Activated T-helper 1 cell treated with anti-CD3 and anti-CD28 coated beads, Interleukin-12 subunit alpha, Interleukin-12 subunit beta, Interleukin-2, Interleukin-4 antibody, amounts not matched to agents 30 ng/mL and 10 ng/mL and 1 ng/mL, durations not matched to agents 14 hours and 24 hours and 36 hours (primary cell): ENCODE measurements at regions of chr4 and their contacts with region 1.

Region 1: GRCh38 chr4:140095694-140096482 is 58.1 kb downstream of the MAML3 start:
- DNase-seq: peak; percentile 63
- H3K4me3 Mint-ChIP-seq: peak overlapping the region; percentile 80
- H3K27ac Mint-ChIP-seq: peak overlapping the region; percentile 94
- H3K4me1 Mint-ChIP-seq: peaks cover 89% of the 10 kb centered on the region
- H3K27me3 Mint-ChIP-seq: peaks cover 3% of the 10 kb centered on the region

Region 2: GRCh38 chr4:138562544-138562991 is 1533.3 kb before region 1 on chr4:
- intact Hi-C with region 1: no loop called
- DNase-seq: no peak
- H3K4me3 Mint-ChIP-seq: no peak overlapping the region
- H3K27ac Mint-ChIP-seq: no peak overlapping the region
- H3K4me1 Mint-ChIP-seq: no peaks in the 10 kb centered on the region
- H3K27me3 Mint-ChIP-seq: no peaks in the 10 kb centered on the region

Region 3: DNA sequence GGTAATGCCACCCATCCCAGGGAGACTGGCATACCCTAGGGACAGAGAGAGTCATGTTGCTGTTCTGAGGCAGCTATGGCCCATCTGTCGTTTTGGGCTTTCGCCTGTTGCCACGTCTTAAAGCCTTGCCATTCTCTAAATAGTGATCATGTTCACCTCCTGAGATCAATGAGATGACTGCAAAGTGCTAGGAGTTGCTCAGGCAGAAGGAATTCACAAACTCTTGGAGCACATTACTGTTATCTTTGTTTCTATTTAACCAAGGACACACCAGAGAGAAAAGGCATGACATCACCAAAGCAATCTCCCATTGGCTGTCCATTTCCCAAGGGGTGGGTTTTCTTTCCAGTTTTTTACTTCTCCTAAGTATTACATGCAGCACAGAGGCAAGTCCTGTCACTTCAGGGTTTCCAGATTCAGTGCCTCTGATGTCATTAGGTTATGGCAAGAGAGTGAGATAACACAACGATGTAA is 502.8 kb before region 1 on chr4:
- intact Hi-C with region 1: no loop called
- DNase-seq: no peak
- H3K4me3 Mint-ChIP-seq: no peak overlapping the region
- H3K27ac Mint-ChIP-seq: no peak overlapping the region
- H3K4me1 Mint-ChIP-seq: no peaks in the 10 kb centered on the region
- H3K27me3 Mint-ChIP-seq: peaks cover 31% of the 10 kb centered on the region

Region 4: GRCh38 chr4:139841464-139842246 is 254.2 kb before region 1 on chr4:
- intact Hi-C with region 1: no loop called
- DNase-seq: no peak
- H3K4me3 Mint-ChIP-seq: no peak overlapping the region
- H3K27ac Mint-ChIP-seq: no peak overlapping the region
- H3K4me1 Mint-ChIP-seq: no peaks in the 10 kb centered on the region
- H3K27me3 Mint-ChIP-seq: peaks cover 10% of the 10 kb centered on the region

Region 5: DNA sequence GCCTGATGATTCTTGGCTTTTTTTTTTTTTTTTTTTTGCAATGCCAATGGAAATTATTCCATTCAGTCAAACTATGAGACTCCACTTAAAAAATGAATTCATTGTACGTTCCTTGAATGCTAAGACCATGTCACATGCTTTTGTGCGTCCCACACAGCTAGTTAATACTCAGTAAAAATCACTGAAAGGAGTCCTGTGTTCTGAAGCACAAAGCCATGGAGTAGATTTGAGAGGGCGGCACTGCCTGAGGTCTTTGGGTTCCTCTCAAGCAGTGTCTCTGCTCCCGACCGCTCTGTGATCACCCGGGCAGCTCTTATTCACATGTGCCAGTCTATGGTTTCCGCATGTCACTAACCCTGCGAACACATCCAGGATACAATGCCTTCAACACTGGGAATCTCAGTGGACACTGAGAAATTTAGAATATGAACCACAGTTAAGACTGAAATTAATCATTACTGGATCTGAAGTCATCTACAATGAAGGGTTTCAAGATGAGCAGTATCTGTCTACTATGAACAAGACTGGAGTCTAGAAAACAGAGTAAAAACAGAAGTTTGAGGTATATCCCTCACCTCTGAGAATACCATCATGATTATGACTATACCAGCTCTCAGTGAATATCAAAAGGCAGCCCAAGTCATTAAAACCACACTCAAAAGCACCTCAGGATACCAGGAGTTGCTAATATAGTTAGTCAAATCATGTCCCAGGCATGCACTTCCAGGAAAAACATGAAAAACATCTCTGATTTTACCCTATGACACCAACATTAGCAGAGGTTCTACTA is 237.3 kb before region 1 on chr4:
- intact Hi-C with region 1: loop called (anchors 1 kb)
- DNase-seq: no peak
- H3K4me3 Mint-ChIP-seq: no peak overlapping the region
- H3K27ac Mint-ChIP-seq: no peak overlapping the region
- H3K4me1 Mint-ChIP-seq: peaks cover 33% of the 10 kb centered on the region
- H3K27me3 Mint-ChIP-seq: peaks cover 18% of the 10 kb centered on the region

Region 6: GRCh38 chr4:139875411-139875825 is 220.5 kb before region 1 on chr4:
- intact Hi-C with region 1: no loop called
- DNase-seq: no peak
- H3K4me3 Mint-ChIP-seq: no peak overlapping the region
- H3K27ac Mint-ChIP-seq: no peak overlapping the region
- H3K4me1 Mint-ChIP-seq: peaks cover 12% of the 10 kb centered on the region
- H3K27me3 Mint-ChIP-seq: no peaks in the 10 kb centered on the region

Region 7: DNA sequence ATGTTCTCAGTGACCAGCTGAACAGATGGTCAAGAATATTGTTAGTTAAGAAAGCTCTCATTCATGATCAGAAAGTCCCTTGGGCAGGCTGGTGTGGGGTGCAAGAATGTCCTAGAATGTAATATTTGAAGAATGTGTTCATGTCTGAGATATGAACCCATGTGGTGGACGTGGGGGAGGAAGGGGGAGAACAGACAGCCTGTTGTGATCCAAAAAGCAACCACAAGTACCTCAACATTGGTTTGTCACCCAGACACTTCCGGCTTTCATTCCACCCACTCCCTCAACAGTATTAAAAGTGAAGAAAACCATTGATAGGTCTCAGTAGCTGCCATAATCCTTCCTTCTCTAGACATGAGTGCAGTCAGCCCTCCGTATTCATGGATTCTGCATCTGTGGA is 24.1 kb before region 1 on chr4:
- intact Hi-C with region 1: loop called (anchors 1 kb)
- DNase-seq: peak; percentile 62
- H3K4me3 Mint-ChIP-seq: peak overlapping the region; percentile 71
- H3K27ac Mint-ChIP-seq: peak overlapping the region; percentile 70
- H3K4me1 Mint-ChIP-seq: peaks cover 59% of the 10 kb centered on the region
- H3K27me3 Mint-ChIP-seq: peaks cover 48% of the 10 kb centered on the region

Region 8: DNA sequence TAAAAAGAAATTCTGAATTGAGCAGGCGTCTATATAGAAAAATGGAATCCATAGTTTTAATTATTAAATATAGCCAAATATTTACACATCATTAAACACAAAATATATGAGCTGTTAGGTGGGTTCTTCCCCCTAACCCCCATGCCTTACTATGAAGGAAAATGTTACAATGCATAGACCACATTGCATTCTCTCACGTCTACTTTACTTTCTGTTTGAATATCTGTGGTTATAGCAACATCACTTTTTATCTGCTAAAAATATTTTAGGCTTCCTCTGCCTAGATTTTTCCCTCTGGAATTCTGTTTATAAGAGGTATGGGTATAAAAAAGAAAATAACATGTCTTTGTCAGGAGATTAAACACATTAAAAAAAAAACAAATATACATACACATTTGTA is 15.0 kb before region 1 on chr4:
- intact Hi-C with region 1: loop called (anchors 1 kb)
- DNase-seq: no peak
- H3K4me3 Mint-ChIP-seq: no peak overlapping the region
- H3K27ac Mint-ChIP-seq: no peak overlapping the region
- H3K4me1 Mint-ChIP-seq: peaks cover 36% of the 10 kb centered on the region
- H3K27me3 Mint-ChIP-seq: peaks cover 57% of the 10 kb centered on the region

Region 9: DNA sequence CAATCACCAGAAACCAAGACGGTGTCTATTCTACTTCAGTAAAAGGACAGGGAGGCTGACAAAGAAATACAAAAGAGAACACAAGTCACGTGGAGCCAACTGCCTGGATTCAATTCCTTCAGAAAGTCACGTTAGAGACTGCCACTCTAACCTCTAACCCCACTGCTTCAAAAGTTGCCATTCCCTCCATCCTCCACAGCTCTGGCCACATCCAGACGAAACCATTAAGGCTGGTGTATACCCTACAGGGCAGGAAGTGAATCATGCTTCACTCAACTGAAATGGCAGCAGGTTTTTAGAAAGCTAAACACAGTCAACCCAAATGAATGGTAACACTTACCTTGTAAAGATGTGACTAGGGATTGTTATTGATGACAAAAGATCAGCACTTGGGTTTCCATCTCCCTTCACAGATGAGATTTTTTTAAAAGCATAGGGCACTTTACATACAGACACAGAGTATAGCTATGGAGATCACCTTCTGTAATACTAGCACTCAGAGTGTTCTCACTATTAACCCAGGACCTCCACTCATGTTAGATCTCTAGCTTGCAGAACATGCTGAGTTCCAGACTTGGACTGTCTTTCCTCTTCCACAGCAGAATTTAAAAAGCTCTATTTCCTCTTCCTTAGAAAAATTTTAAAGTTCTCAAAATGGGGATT is 20.7 kb after region 1 on chr4:
- intact Hi-C with region 1: loop called (anchors 1 kb)
- DNase-seq: peak; percentile 25
- H3K4me3 Mint-ChIP-seq: peak overlapping the region; percentile 21
- H3K27ac Mint-ChIP-seq: peak overlapping the region; percentile 3
- H3K4me1 Mint-ChIP-seq: peaks cover 31% of the 10 kb centered on the region
- H3K27me3 Mint-ChIP-seq: peaks cover 26% of the 10 kb centered on the region

Region 10: GRCh38 chr4:140529434-140529833 is 433.5 kb after region 1 on chr4:
- intact Hi-C with region 1: loop called (anchors 5 kb)
- DNase-seq: no peak
- H3K4me3 Mint-ChIP-seq: no peak overlapping the region
- H3K27ac Mint-ChIP-seq: no peak overlapping the region
- H3K4me1 Mint-ChIP-seq: peaks cover 12% of the 10 kb centered on the region
- H3K27me3 Mint-ChIP-seq: no peaks in the 10 kb centered on the region